Calu3 (cell line): ENCODE measurements at regions of chr16 and their contacts with region 1.

Region 1: DNA sequence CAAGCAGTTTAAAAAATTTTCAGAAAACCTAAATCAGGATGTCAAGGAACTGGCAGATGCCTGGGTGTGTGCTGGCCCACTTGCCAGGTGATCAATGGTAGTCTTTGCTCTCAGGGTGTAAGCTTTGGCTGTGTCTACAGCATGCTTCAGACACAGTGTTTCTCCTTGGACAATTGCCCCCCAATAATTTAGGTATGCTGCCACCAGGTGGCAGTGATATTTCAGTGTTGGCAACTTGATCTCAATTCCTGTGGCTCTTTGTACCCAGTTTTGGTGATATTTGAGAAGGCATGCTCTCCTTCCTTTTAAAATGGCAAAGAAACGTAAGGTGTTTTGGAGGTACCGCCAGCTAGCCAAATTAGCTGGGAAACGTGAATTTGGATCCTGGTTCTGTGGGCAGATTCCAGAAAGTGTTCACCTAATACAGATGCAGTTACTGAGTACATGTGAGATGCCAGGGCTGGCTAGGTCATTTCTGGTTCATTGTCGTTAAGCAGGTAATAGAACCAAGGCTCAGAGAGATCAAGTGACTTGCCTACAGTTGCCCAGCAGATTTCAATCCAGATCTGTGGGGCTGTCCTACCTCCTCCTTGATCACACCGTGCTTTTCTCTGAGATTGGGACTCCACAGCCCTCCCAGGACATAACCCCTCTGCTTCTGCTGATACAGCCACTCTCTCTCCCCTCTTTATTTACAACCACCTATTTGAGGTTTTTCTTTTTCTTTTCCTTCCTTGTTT is 155.6 kb upstream of the PLCG2 start:
- DNase-seq: peak; percentile 66
- H3K4me3 Mint-ChIP-seq: no peak overlapping the region
- H3K27ac Mint-ChIP-seq: no peak overlapping the region
- H3K4me1 Mint-ChIP-seq: no peaks in the 10 kb centered on the region
- H3K27me3 Mint-ChIP-seq: no peaks in the 10 kb centered on the region
- CTCF ChIP-seq: peak; percentile 75

Region 2: DNA sequence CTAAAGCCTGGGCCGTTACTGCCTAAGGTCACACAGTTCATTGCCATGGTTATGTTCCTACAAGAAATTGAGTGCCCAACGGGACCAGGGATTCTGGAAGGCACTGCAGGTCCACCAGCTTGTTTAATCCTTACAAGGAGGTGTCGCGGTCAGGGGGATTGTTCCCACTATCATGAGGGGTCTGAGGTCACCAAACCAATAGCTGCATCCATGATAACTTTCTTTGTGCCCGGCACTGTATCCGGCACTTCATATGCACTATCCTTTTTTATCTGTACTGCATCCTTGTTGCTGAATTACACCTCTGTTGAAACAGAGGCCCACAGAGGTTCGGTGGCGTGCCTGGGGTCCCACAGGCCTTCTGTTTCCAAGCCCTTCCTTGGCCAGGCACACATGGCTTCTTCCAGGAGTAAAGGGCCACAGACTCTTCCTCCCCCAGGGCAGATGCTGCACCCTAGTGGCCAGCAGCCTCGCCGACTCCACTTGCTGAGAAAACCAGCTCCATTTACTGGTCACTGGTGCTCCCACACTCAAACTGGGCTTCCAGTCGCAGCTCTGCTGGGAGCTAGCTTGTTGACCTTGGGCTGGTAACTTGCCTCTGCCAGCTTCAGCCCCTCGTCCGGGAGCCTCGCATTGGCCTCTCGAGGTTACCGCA is 73.6 kb after region 1 on chr16:
- CTCF ChIA-PET with region 1: interaction called, 5 read pairs
- intact Hi-C with region 1: loop called (anchors 1 kb)
- DNase-seq: peak; percentile 79
- H3K4me3 Mint-ChIP-seq: no peak overlapping the region
- H3K27ac Mint-ChIP-seq: no peak overlapping the region
- H3K4me1 Mint-ChIP-seq: no peaks in the 10 kb centered on the region
- H3K27me3 Mint-ChIP-seq: no peaks in the 10 kb centered on the region
- CTCF ChIP-seq: peak; percentile 63